ENCODE measurements at regions of chr1 and their contacts with region 1.

Region 1: DNA sequence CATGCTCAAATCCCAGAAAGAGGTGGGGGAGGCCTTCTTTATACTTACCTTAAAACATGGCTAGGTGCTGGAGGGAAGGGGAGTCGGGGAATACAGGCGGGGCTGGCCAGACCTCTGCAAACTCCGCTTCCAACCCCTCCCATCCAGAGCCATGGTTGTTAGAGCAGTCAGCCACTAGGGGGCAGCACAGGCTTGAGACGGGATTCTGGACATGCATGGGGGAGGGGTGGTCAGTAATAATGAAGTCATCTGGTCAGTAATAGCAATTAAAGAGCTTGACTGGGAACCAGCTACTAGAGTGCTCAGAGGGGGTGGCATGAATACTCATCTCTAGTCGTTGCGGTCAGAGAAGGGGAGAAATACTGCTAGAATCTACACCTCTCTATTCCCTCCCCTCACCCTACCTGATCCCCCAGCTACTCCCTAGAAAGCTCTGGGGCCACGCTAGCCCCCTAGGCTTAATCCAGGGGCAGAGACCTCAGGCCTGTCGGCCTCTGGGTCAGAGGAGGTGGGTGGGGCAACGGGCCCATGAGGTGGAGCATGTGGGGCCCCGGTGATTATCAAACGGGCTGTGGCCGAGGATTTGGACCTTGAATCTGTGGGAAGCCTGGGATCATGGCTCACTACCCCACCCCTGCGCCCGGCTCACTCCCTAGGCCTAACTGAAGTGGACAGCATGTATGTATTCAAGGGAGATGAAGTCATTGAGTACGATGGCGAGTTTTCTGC is 2.9 kb downstream of the CASQ1 start:
- DNase-seq: peak; percentile 76 to 96 (median 90)
- ATAC-seq: peak; percentile 93 to 99 (median 98)
- H3K4me3 ChIP-seq: no peak overlapping the region
- H3K27ac ChIP-seq: no peak overlapping the region
- H3K4me1 ChIP-seq: no peaks in the 10 kb centered on the region
- H3K27me3 ChIP-seq: no peaks in the 10 kb centered on the region
- CTCF ChIP-seq: peak; percentile 92 to 96 (median 94)

Region 2: DNA sequence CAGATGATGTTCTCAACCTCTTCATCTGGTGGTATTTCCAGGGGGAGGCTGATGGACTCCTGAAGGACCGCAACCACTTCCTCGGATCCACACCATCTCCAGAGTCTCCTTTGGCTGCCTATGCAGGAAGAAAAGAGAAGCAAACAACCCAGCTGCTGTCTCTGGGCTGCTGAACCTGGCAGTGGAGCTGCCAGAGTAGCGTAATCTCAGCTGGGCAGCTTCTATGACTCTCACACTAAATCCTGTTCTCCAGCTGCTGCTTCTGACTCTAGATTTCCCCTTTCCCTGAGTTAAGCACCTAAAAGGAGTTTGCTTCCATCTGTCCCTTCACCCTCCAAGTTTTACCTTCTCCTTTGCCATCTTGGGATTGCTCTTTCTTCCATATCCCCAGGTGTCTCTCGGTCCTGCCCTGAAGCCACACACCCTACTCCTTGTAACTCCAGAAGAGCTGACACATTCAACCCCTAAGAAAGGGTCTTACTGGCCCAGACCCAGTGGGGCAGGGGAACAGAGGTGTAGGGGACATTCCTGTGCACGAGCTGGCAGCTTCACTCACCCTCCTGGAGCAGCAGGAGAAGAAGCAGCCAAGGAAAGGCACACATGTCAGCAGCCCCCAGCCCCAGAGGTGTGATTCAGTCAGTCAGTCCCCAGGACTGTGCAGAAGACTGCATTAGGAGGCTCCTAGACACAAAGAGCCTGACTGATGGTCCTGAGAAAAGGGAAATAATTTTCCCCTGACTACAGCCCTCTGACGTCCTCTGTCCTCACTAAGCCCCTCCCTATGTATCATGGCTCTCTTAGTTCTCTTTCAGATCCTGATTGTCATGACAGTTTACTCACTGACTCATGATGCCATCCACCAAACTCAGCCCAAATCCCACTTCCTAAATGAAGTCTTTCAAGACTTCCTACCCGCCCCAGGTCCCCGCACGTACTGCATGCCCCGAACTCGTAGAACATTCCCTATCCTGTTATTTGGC is 239.4 kb before region 1 on chr1 and contains the start of gene SLAMF9:
- intact Hi-C with region 1: no loop called
- DNase-seq: no peak
- ATAC-seq: peak in 2 of 4 donors; percentile 23 to 36
- H3K4me3 ChIP-seq: no peak within 1 kb of the TSS
- H3K27ac ChIP-seq: no peak within 1 kb of the TSS
- H3K4me1 ChIP-seq: peaks cover 7 to 13% (median 13%) of the 10 kb centered on the region in 3 donors
- H3K27me3 ChIP-seq: no peaks in the 10 kb centered on the region
- CTCF ChIP-seq: no peak
- total RNA-seq, gene SLAMF9: not detected

Region 3: DNA sequence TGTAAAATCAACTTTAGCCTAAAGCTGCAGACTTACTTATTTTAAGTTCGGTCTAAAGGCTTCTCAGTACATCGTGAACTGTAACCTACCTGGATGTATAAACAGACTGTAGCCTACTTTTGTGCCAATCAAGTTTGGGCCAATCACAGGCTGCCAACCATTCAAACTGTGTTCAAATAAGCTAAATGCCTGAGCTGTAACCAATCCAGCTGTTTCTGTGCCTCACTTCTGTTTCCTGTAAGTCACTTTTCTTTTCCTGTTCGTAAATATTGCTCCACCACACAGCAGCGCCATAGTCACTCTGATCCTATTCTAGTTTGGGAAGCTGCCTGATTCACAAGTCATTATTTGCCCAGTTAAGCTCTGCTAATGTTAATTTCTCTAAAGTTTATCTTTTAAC is 201.7 kb before region 1 on chr1:
- intact Hi-C with region 1: no loop called
- DNase-seq: no peak
- ATAC-seq: peak in 2 of 4 donors; percentile 41 to 77
- H3K4me3 ChIP-seq: no peak overlapping the region
- H3K27ac ChIP-seq: no peak overlapping the region
- H3K4me1 ChIP-seq: no peaks in the 10 kb centered on the region
- H3K27me3 ChIP-seq: no peaks in the 10 kb centered on the region
- CTCF ChIP-seq: no peak

Region 4: DNA sequence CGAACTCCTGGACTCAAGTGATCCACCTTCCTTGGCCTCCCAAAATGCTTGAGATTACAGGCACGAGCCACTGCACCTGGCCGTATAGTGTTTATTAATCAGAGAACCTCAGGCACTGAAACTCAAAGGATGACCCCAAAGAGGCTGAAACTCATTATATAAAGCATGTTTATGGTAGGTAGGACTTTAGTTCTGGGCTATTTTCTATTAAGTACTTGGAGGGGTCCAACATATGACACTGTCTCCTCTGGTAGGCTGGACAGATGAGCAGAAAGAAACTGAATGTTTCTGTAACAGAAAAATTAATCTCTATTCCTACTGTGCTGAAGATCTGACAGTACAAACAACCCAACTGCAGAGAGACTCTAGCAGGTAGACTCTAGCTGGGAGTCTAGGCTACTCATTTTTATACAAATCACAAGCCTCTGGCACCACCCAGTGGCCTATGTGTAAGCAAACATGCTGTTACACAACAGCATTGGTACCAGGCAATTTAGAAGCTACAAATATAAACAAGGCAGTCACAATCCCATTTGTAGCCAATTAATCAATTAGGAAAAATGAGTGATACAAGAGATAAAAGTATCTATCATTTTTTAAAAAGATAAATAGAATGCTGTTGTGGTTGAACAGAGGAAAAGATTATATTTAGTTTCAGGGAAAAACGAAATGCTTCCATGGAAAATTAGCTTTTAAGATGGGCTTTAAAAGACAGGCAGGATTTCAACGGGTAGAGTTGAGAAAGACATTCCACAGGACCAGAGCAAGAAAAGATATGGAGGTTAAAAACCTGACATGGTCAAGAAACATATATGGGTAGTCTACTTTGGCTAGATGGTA is 58.7 kb after region 1 on chr1:
- intact Hi-C with region 1: loop called in 1 of 3 experiments (anchors 5 kb)
- DNase-seq: peak in 5 of 6 donors; percentile 55 to 72 (median 69)
- ATAC-seq: peak; percentile 90 to 97 (median 96)
- H3K4me3 ChIP-seq: no peak overlapping the region
- H3K27ac ChIP-seq: peak overlapping the region in 2 of 4 donors; percentile 1 to 22
- H3K4me1 ChIP-seq: peaks cover 14 to 30% (median 26%) of the 10 kb centered on the region in 3 donors
- H3K27me3 ChIP-seq: no peaks in the 10 kb centered on the region
- CTCF ChIP-seq: peak; percentile 39 to 59 (median 47)

Region 5: DNA sequence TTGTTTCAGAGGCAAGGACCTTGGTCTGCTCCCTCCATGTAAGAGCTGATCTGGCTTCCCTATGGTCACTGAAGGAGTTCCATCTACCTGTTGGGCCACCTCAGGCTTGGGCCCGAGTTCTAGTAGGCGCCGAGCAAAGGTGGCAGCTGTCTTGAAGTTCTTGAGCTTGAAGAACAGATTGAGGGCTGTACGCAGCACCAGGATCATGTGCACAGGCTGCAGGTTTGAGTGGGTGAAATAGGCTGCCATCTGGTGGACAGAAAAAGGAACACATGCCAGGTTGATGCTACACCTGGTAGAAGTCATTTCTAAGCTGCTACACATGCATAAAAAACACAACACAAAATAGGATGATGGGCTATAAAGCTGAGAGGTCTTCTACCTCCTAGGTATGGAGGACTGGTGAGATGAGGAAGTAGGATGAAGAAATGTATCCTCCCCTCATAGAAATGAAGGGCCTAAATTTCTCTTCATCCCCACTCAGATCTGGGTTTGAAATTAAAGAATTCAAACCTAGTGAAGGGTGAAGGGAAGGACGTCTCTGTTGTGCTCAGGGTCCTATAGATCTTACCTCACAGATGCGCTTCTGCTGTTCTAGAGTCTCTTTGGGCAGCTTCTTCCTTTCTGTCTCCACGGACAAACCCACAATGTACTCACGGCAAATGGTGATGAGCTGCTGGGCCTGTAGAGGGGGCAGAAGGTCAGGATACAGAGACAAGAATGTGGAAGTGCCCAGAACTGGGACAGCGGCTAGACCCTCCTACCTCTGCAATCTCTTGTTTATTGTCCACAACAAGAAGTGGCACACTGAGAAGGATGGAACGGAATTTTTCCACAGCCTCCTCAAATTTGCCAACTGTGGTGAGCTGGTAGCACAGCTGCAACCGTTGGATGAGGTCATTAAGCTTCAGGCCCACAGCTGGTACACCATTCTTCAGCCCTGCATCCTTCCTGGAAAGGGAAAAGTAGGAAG is 98.3 kb after region 1 on chr1:
- intact Hi-C with region 1: loop called in 1 of 3 experiments (anchors 5 kb)
- DNase-seq: peak in 5 of 6 donors; percentile 35 to 76 (median 54)
- ATAC-seq: peak; percentile 86 to 98 (median 93)
- H3K4me3 ChIP-seq: no peak overlapping the region
- H3K27ac ChIP-seq: no peak overlapping the region
- H3K4me1 ChIP-seq: no peaks in the 10 kb centered on the region
- H3K27me3 ChIP-seq: no peaks in the 10 kb centered on the region
- CTCF ChIP-seq: peak; percentile 54 to 85 (median 67)

Region 6: GRCh38 chr1:160376525-160377131 is 183.4 kb after region 1 on chr1:
- intact Hi-C with region 1: loop called in 1 of 3 experiments (anchors 10 kb)
- DNase-seq: peak in 2 of 6 donors; percentile 27 to 45
- ATAC-seq: peak; percentile 81 to 91 (median 90)
- H3K4me3 ChIP-seq: no peak overlapping the region
- H3K27ac ChIP-seq: peak overlapping the region in 1 of 4 donors; percentile 27
- H3K4me1 ChIP-seq: no peaks in the 10 kb centered on the region
- H3K27me3 ChIP-seq: no peaks in the 10 kb centered on the region
- CTCF ChIP-seq: peak; percentile 68 to 83 (median 81)

Region 7: GRCh38 chr1:160460683-160461287 is 267.5 kb after region 1 on chr1:
- intact Hi-C with region 1: no loop called
- DNase-seq: no peak
- ATAC-seq: no peak
- H3K4me3 ChIP-seq: no peak overlapping the region
- H3K27ac ChIP-seq: no peak overlapping the region
- H3K4me1 ChIP-seq: no peaks in the 10 kb centered on the region
- H3K27me3 ChIP-seq: no peaks in the 10 kb centered on the region
- CTCF ChIP-seq: no peak

Measured in pancreas (tissue), 10 donors.